ENCODE measurements at regions of chr5 and their contacts with region 1.

Region 1: GRCh38 chr5:172714491-172715421 is 56.2 kb downstream of the DUSP1 start:
- DNase-seq: no peak
- H3K4me3 ChIP-seq: no peak overlapping the region
- H3K27me3 ChIP-seq: no peaks in the 10 kb centered on the region; the same call in 1 of the 2 replicates
- CTCF ChIP-seq: peak; percentile 91

Region 2: GRCh38 chr5:172110921-172111851 is 603.6 kb before region 1 on chr5:
- CTCF ChIA-PET with region 1: no interaction called
- POLR2A ChIA-PET with region 1: no interaction called
- DNase-seq: no peak
- H3K4me3 ChIP-seq: no peak overlapping the region
- H3K27me3 ChIP-seq: no peaks in the 10 kb centered on the region
- CTCF ChIP-seq: no peak

Region 3: DNA sequence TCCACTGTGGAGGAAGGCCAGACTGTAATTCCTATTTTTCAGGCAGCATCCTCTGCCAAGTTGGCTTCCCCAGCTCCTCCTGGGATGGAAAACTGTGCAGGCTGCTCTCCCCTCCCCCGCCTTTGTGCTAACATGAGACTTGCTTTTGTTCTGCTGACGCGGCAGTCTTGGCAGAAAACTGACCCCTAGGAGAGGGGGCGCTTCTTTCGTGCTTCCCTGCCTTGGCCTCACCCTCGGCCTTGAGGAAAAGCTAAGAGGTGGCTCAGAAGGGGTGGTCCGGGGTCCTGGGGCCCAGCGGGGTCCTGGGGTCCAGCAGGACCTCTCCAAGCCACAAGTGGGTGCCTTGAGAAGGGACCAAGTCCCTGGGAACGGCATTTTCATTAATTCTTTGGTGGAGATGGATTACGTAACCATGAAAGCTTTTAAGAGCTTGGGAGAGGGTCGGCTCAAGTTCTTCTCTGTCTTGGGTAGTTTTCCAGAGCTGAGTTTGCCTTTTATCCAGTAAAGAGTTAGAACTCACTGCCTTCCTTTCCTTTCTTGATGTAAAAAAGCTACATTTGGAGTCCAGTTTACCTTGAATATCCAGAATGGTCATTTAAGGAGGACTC is 311.5 kb before region 1 on chr5:
- CTCF ChIA-PET with region 1: no interaction called
- POLR2A ChIA-PET with region 1: no interaction called
- DNase-seq: no peak
- H3K4me3 ChIP-seq: no peak overlapping the region
- H3K27me3 ChIP-seq: no peaks in the 10 kb centered on the region
- CTCF ChIP-seq: no peak

Region 4: DNA sequence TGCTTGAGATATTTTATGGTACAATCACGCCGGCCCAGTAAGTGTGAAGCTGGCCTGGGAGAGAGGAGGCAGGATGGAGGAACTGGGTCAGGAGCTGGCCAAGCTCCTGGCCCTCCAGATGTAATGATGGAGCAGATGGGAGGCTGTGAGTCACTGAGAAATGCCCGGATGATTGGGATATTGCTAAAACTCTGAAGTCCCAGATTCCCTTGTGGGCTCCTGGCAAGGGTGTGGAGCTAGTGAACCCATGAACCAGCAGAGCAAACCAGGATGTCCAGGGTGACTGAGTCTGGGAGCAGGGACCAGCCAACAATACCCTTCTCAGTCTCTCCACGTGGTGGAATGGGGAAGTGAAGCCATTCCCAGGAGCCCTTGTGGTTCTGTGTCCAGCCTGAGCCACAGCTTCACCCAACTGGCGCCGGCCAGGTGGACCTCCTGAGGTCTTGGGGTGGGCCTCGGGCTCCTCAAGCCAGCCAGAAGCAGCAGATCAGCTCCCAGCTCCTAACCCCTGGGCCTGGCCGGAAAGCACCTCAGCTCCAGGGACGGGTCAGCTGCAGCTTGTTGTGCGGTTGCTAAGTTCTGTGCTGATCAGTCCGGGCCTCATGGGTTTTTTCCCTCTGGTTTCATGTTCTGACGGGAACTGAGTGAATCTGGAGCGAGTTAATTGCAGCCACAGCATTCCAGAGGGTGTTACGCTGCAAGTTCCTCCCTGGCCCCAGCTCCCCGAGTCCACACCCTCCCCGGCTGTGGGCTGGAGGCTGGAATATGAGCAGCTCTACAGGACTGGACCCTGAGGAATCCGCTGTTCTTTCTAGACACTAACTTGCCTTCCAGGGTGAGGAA is 18.6 kb after region 1 on chr5:
- CTCF ChIA-PET with region 1: interaction called, 21 read pairs
- POLR2A ChIA-PET with region 1: interaction called, 3 read pairs
- DNase-seq: peak; percentile 99
- H3K4me3 ChIP-seq: no peak overlapping the region
- H3K27me3 ChIP-seq: no peaks in the 10 kb centered on the region
- CTCF ChIP-seq: no peak

Region 5: DNA sequence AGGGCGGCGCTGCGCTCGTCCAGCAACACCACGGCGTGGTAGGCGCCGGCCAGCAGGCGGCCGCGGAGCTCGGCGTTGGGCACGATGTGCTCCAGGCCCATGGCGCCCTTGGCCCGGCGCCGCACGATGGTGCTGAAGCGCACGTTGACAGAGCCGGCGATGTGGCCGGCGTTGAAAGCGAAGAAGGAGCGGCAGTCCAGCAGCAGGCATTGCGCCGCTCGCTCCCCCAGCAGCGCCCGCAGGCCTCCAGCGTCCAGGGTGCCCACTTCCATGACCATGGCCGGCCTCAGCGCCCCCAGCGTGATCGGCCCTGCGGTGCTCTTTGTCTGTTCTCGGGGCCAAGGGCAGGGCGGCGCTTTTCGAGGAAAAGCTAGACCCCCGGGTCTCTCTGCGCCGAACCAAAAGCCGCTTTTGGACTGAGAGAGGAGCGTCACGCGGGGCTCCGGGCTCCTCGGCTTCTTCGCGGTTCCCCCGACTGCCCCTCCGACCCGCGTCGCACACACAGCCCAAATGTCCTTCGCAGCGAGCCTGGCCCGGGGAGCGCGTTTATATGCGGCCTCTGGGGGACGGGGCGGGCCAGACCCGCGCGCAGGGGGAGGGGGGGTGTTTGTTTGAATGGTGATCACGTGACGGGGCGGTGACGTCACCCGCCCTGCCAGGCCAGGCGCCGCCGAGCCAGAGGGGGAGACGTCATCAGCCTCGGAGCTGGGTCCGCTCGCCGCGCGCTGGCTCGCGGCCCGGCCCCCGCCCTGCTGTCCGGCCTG is 56.1 kb after region 1 on chr5 and contains the start of gene DUSP1:
- CTCF ChIA-PET with region 1: interaction called, 92 read pairs
- POLR2A ChIA-PET with region 1: no interaction called
- DNase-seq: peak; percentile 82
- H3K4me3 ChIP-seq: peak within 1 kb of the TSS; percentile 82
- H3K27me3 ChIP-seq: no peaks in the 10 kb centered on the region
- CTCF ChIP-seq: peak; percentile 31; the same call in 1 of the 2 replicates
- polyA plus RNA-seq, gene DUSP1: 252 and 432 TPM in 2 replicates

Region 6: DNA sequence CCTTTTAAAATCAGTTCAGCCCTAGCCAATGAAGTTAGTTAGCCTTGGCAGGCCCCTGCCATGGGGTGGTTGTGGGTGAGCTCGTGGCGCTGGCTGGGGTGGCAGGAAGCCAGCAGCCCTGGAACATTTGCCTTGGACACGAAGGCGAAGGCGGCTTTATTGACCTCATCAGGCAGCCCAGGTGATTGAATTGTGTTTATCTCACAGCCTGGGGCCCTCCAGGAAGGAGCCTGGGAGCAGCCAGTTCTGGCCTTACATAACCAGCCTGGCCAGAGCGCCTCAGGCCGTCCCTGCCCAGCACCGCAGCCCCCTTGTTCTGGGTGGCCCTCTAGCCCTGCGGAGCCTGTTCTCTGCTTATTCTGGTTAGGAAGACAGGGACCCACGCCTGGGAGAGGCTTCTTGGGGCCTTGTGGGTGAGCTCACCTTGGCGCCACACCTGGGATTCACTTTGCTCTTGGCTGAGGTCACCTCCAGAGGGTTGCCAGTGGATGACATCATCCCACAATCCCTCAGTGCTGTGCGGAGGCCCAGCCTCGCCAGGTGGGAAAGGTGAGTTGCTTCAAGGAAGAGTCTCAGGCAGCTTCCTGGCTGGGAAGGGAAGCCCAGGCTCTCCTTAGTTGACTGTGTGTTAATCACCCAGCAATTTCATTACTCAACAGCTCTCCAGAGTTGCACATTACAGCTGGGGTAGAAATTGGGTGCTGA is 190.0 kb after region 1 on chr5:
- CTCF ChIA-PET with region 1: interaction called, 11 read pairs
- POLR2A ChIA-PET with region 1: no interaction called
- DNase-seq: no peak
- H3K4me3 ChIP-seq: no peak overlapping the region
- H3K27me3 ChIP-seq: no peaks in the 10 kb centered on the region
- CTCF ChIP-seq: no peak

Region 7: DNA sequence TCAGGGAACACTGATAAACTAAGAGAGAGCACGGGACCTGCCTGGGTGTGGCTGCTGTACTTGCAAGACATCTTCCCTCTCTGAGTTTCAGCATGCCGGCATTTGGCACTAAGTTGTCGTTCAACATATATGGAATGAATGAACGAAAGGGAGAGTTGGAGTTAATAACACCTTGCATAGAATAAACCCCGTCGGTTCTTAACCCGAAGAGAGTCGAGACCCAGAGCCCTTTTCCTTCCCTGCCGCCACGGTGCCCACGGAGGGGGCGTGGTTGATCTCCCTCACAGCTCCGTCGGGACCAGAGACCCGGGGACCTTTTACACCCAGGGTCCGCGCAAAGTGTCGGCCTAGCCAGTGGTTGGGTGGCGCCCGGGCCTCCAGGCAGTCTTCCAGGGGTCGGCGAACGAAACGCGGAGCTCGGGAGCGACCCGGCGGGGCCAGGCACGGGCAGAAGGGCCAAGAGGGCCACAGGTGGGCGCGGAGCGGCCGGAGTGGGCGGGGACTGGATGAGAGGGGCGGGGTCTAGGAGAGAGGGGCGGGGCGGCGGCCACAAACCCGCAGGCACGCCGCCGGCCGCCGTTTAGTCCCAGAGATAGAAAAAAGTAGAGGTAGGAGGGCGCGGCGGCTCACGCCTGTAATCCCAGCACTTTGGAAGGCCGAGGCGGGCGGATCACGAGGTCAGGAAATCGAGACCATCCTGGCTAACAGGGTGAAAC is 243.7 kb after region 1 on chr5:
- CTCF ChIA-PET with region 1: interaction called, 19 read pairs
- POLR2A ChIA-PET with region 1: interaction called, 4 read pairs
- DNase-seq: no peak
- H3K4me3 ChIP-seq: peak overlapping the region; percentile 94
- H3K27me3 ChIP-seq: no peaks in the 10 kb centered on the region
- CTCF ChIP-seq: no peak